Right ventricle myocardium inferior (tissue), 1 donor: ENCODE measurements at regions of chr1 and their contacts with region 1.

Region 1: GRCh38 chr1:164895026-164895912 is 336.3 kb downstream of the PBX1 start:
- DNase-seq: peak; percentile 37
- ATAC-seq: peak; percentile 89

Region 2: GRCh38 chr1:164846731-164847691 is 48.3 kb before region 1 on chr1:
- intact Hi-C with region 1: no loop called
- DNase-seq: peak; percentile 31
- ATAC-seq: peak; percentile 41

Region 3: DNA sequence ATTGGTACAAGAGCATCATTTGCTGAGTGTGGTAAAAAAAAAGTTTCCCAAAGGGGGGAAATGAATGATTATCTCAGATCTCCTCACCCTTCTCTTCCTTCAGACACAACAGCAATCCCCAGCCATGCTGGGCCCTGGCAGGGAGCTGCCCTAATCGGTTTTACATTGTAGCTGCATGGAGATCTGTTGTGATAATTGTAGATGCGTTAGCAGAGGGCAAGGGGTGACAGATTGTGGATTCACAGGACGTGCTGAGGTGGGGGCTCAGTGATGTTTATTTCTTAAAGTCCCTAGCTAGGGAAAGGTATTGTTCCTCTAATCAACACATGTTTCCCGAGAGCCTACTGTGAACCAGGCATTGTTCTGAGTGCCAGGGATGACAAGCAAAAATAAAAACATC is 32.2 kb before region 1 on chr1:
- intact Hi-C with region 1: loop called (anchors 5 kb)
- DNase-seq: no peak
- ATAC-seq: no peak